ENCODE measurements at regions of chr1 and their contacts with region 1.

Region 1: DNA sequence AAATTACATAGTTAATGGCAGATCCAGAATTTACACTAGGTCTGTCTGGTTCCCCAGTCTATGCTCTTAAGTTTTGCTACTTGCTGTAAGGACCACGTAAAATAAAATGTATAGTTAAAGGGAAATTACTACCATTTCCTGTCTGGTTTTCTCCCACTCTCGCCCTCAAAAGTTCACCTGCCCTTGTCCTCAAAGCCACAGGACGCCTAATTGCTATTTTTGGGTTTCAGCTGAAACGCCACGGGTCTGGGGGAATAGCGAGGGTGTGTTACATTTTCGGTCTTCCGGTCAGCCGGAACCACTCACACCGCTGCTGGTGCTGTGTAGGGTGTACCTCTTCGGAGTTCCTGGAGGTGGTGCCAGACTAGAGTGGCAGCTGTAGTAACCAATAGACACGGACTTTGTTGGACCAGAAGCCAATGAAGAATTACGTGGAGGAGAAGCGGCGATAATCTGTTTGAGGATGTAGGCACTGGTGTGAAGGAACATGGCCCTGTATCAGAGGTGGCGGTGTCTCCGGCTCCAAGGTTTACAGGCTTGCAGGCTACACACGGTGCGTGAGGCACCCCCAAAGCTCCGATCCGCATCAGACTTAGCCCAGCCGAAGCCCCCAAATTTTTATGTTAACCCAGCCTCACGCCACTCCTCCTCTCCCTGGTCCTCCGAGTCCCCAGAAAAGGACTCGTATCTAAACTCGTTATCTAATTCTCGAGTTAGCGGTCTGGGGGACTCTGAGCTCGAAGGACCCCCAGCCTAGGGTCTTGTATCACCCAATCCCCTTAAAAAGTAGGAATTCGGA is at the start of gene TARS2:
- DNase-seq: peak; percentile 96
- total RNA-seq, gene TARS2: 10.7 to 16.0 TPM

Region 2: GRCh38 chr1:150537732-150538684 is 50.8 kb after region 1 on chr1:
- intact Hi-C with region 1: loop called in 1 of 2 experiments (anchors 10 kb)
- DNase-seq: peak; percentile 87

Region 3: GRCh38 chr1:150561974-150562445 is 74.8 kb after region 1 on chr1:
- intact Hi-C with region 1: loop called in 1 of 2 experiments (anchors 1 kb)
- DNase-seq: peak; percentile 98

Region 4: GRCh38 chr1:150708595-150708994 is 221.4 kb after region 1 on chr1:
- intact Hi-C with region 1: no loop called
- DNase-seq: no peak

Region 5: GRCh38 chr1:151416231-151416904 is 929.2 kb after region 1 on chr1:
- intact Hi-C with region 1: loop called in 1 of 2 experiments (anchors 5 kb)
- DNase-seq: no peak

Measured in posterior vena cava (tissue), 2 donors.